Dendritic cell treated with granulocyte-macrophage colony-stimulating factor and Interleukin-4, amounts not matched to agents 40 ng/mL and 50 ng/mL, for 4 days (primary cell): ENCODE measurements at regions of chr4 and their contacts with region 1.

Region 1: DNA sequence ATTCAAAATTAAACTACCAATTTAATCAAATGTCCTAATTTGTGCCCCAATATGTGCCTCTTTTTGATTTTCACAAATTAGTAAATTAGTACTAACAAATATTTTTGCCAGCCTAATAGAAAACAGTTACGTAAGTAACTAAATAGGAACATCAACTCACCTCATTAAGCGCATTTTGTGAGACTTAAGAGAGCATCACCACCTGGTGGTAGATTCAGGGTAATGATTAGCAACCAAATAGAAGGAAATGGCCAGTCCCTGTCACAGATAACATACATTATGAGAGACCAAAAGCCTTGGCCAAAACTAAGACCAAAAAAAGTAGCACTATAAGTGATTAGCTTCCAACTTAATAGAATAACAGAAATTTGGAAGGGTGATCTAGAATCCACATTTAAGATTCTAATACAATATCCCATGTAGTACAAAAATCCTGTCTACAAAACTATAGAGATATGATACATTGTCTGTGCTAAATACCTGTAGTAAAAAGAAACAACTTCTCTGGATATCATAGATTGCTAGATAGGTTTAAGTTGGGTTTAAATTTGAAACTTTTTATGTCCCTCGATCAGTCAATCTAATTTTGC is 46.7 kb downstream of the C4orf46 start:
- H3K4me3 Mint-ChIP-seq: no peak overlapping the region
- H3K27ac Mint-ChIP-seq: no peak overlapping the region
- H3K4me1 Mint-ChIP-seq: no peaks in the 10 kb centered on the region
- H3K27me3 Mint-ChIP-seq: no peaks in the 10 kb centered on the region

Region 2: GRCh38 chr4:157992038-157992705 is 632.8 kb before region 1 on chr4:
- intact Hi-C with region 1: loop called (anchors 5 kb)
- H3K4me3 Mint-ChIP-seq: peak overlapping the region; percentile 75
- H3K27ac Mint-ChIP-seq: peak overlapping the region; percentile 86
- H3K4me1 Mint-ChIP-seq: peaks cover 49% of the 10 kb centered on the region
- H3K27me3 Mint-ChIP-seq: no peaks in the 10 kb centered on the region

Region 3: GRCh38 chr4:158193171-158193749 is 431.7 kb before region 1 on chr4:
- intact Hi-C with region 1: loop called (anchors 5 kb)
- H3K4me3 Mint-ChIP-seq: no peak overlapping the region
- H3K27ac Mint-ChIP-seq: peak overlapping the region; percentile 15
- H3K4me1 Mint-ChIP-seq: peaks cover 11% of the 10 kb centered on the region
- H3K27me3 Mint-ChIP-seq: no peaks in the 10 kb centered on the region

Region 4: DNA sequence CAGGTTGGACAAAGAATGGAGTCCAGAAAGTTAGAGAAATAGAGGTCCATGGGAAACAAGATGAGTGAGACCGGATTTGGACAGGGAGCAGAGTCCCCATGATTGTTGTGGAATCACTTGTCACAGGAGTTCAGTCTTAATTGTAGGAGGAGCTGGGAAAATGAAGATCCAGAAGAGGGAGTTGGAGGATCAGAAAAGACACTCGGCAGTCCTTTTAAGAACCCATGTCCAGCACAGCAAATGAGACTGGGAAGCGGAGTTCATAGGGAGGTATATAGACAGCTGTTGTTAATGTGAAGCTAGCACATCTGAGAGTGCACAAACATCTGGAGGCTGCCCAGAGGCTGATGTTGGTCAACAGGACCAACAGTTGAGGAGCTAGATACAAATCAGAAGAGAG is 214.7 kb before region 1 on chr4:
- intact Hi-C with region 1: loop called (anchors 10 kb)
- H3K4me3 Mint-ChIP-seq: no peak overlapping the region
- H3K27ac Mint-ChIP-seq: no peak overlapping the region
- H3K4me1 Mint-ChIP-seq: no peaks in the 10 kb centered on the region
- H3K27me3 Mint-ChIP-seq: no peaks in the 10 kb centered on the region

Region 5: GRCh38 chr4:158496030-158496741 is 128.8 kb before region 1 on chr4:
- intact Hi-C with region 1: loop called (anchors 1 kb)
- H3K4me3 Mint-ChIP-seq: no peak overlapping the region
- H3K27ac Mint-ChIP-seq: no peak overlapping the region
- H3K4me1 Mint-ChIP-seq: peaks cover 5% of the 10 kb centered on the region
- H3K27me3 Mint-ChIP-seq: no peaks in the 10 kb centered on the region

Region 6: GRCh38 chr4:158949099-158949498 is 324.1 kb after region 1 on chr4:
- intact Hi-C with region 1: no loop called
- H3K4me3 Mint-ChIP-seq: no peak overlapping the region
- H3K27ac Mint-ChIP-seq: no peak overlapping the region
- H3K4me1 Mint-ChIP-seq: no peaks in the 10 kb centered on the region
- H3K27me3 Mint-ChIP-seq: peaks cover 2% of the 10 kb centered on the region